Activated CD4-positive, alpha-beta T cell treated with anti-CD3 and anti-CD28 coated beads for 36 hours (primary cell): ENCODE measurements at regions of chr1 and their contacts with region 1.

Region 1: GRCh38 chr1:217605068-217605789 is 25.7 kb downstream of the GPATCH2 start:
- DNase-seq: no peak
- ATAC-seq: no peak
- H3K4me3 Mint-ChIP-seq: no peak overlapping the region
- H3K27ac Mint-ChIP-seq: no peak overlapping the region
- H3K4me1 Mint-ChIP-seq: no peaks in the 10 kb centered on the region
- H3K27me3 Mint-ChIP-seq: no peaks in the 10 kb centered on the region

Region 2: GRCh38 chr1:217205578-217205977 is 399.7 kb before region 1 on chr1:
- CTCF ChIA-PET with region 1: no interaction called
- POLR2A ChIA-PET with region 1: no interaction called
- intact Hi-C with region 1: no loop called
- DNase-seq: no peak
- ATAC-seq: no peak
- H3K4me3 Mint-ChIP-seq: no peak overlapping the region
- H3K27ac Mint-ChIP-seq: no peak overlapping the region
- H3K4me1 Mint-ChIP-seq: no peaks in the 10 kb centered on the region
- H3K27me3 Mint-ChIP-seq: no peaks in the 10 kb centered on the region

Region 3: GRCh38 chr1:217586586-217586985 is 18.6 kb before region 1 on chr1:
- CTCF ChIA-PET with region 1: interaction called, 3 read pairs
- POLR2A ChIA-PET with region 1: no interaction called
- intact Hi-C with region 1: loop called in 1 of 2 experiments (anchors 1 kb)
- DNase-seq: no peak
- ATAC-seq: no peak
- H3K4me3 Mint-ChIP-seq: no peak overlapping the region
- H3K27ac Mint-ChIP-seq: no peak overlapping the region
- H3K4me1 Mint-ChIP-seq: no peaks in the 10 kb centered on the region
- H3K27me3 Mint-ChIP-seq: no peaks in the 10 kb centered on the region